GM18951 (cell line): ENCODE measurements at regions of chr11 and their contacts with region 1.

Region 1: DNA sequence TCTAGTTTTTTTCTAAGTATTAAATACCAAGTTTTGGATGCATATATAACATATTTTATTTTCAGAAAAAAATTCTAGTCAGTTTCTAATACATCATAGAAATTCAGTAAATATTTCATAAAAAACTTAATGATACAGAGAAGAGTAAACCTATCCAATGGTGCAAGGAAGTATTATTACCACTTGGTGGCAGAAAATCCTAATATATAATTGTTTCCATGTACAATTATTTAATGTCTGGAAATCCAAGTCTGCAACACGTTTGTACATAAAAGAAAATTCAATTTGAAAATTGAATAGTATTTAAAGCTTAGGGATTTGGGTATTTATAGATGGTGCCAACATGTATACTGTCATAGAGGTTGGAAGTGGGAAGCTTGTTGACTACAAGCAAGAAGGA is 127.0 kb downstream of the TRPC6 start:
- POLR2A ChIP-seq: no peak

Region 2: DNA sequence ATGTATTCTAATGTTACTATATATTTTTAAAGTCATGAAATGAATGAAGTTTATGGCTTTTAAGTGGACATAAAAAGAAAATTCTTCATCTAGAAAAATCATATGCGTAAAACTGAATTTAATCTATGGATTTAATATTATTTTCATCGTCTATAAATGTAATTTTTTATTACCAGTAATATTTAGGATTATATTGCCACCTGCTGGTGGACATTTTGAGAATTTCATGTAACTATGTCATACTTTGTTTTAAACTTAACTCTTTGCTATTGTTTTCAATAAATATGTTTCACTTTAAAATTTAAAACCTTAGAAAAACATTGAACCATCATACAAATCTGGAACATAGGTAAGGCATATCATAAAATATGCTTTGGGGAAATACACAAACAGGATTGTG is 391.4 kb after region 1 on chr11:
- in situ Hi-C with region 1: loop called (anchors 25 kb)
- POLR2A ChIP-seq: no peak

Region 3: DNA sequence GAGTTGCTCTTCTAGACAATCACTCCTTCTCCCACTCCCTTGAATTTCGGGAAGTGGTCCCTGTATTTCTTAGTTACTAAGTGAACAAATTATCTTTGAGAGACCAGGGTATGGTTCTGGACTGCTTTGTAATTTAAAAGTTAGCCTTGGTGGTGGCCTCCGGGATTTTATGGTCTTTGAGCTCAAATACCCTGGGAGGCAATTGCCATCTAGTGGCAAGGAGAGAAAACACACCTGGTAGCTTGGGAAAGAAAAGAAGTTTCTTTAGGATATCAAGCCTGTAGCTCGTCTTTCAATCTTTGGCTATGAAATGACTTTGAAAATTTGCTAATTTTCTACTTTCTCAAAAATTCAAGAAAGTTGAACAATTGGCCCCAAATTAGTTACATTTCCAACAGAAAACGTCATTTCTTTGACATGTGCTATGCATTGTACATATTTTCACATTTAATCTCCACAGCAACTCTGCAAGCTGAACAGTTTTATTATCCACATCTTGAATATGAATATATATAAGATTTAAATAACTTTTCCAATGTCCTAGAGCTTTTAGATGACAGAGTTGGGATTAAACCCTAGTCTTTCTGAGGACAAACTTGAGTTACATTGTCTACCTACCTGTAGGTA is 1209.6 kb after region 1 on chr11:
- in situ Hi-C with region 1: loop called (anchors 25 kb)
- POLR2A ChIP-seq: no peak